Activated CD8-positive, alpha-beta T cell treated with anti-CD3 and anti-CD28 coated beads for 36 hours (primary cell): ENCODE measurements at regions of chr12 and their contacts with region 1.

Region 1: GRCh38 chr12:49060237-49061156 is at the start of gene KMT2D:
- DNase-seq: peak; percentile 92
- ATAC-seq: peak; percentile 76
- H3K4me3 Mint-ChIP-seq: peak within 1 kb of the TSS; percentile 97
- H3K27ac Mint-ChIP-seq: peak within 1 kb of the TSS; percentile 98
- H3K4me1 Mint-ChIP-seq: peaks cover 39% of the 10 kb centered on the region
- H3K27me3 Mint-ChIP-seq: no peaks in the 10 kb centered on the region
- CTCF ChIP-seq: no peak
- total RNA-seq, gene KMT2D: 57.5 to 62.3 TPM

Region 2: DNA sequence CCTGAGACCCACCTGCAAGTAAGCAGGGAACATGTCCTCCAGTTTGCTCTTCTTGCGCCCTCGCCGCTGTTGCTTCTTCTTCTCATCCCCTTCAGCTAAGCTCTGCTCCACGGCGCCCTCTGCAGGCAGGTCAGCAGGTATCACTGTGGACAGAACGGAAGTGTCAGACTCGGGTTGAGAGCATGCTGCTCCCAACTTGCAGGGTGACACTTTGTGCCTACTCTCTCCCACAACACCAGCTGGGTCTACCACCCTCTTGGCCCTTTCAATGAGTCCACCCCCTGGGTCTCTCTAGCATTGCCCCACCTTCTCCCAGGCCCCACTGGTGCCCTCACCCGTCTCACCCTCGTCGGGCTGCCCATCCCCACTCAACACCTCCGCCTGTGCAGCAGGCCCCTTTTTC is 16.6 kb before region 1 on chr12:
- CTCF ChIA-PET with region 1: interaction called, 56 read pairs
- POLR2A ChIA-PET with region 1: interaction called, 6 read pairs
- intact Hi-C with region 1: no loop called
- DNase-seq: peak; percentile 84
- ATAC-seq: peak; percentile 94
- H3K4me3 Mint-ChIP-seq: no peak overlapping the region
- H3K27ac Mint-ChIP-seq: no peak overlapping the region
- H3K4me1 Mint-ChIP-seq: no peaks in the 10 kb centered on the region
- H3K27me3 Mint-ChIP-seq: no peaks in the 10 kb centered on the region
- CTCF ChIP-seq: peak; percentile 86

Region 3: DNA sequence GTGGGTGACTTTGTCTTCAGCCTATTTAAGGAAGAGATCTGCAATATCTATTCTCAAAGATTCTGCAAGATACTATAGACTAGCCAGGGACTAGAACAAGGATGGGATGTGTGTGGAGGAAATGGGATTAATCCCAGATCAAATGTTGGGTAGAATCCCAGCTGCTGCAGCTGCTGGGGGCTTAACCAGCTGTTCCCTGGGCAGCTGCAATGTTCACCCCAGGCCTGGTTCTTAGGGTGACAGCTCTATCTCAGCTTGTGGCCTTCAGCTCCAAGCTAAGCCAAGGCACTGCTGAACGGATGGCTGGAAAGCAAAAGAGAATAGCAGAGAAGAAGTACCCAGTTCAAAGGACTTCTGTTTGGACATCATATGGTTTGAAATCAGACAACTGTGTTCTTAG is 19.3 kb after region 1 on chr12:
- CTCF ChIA-PET with region 1: interaction called, 161 read pairs
- POLR2A ChIA-PET with region 1: interaction called, 5 read pairs
- intact Hi-C with region 1: no loop called
- DNase-seq: no peak
- ATAC-seq: no peak
- H3K4me3 Mint-ChIP-seq: no peak overlapping the region
- H3K27ac Mint-ChIP-seq: no peak overlapping the region
- H3K4me1 Mint-ChIP-seq: no peaks in the 10 kb centered on the region
- H3K27me3 Mint-ChIP-seq: no peaks in the 10 kb centered on the region
- CTCF ChIP-seq: no peak

Region 4: DNA sequence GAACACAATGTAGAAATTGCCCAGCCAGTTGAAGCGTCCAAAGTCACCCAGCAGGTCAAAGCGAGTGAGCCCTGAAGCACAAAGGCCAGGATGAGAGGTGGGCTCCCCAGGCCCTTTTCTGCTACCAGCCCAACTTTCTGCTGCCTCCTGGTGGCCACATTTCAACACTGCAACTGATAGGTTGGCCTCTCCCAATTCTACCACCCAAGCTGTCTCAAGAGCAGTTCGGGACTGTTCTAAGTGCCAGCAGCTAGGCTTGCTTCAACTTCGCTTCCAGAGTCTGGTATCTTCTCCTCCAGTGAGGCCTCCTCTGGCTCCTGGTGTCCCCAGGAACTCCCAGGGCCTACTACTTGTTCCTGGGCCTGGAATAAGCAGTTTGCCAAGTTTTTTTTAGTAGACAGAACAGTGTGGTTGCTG is 37.5 kb after region 1 on chr12:
- CTCF ChIA-PET with region 1: interaction called, 220 read pairs
- POLR2A ChIA-PET with region 1: interaction called, 3 read pairs
- intact Hi-C with region 1: loop called (anchors 2 kb)
- DNase-seq: peak; percentile 81
- ATAC-seq: peak; percentile 87
- H3K4me3 Mint-ChIP-seq: no peak overlapping the region
- H3K27ac Mint-ChIP-seq: no peak overlapping the region
- H3K4me1 Mint-ChIP-seq: peaks cover 7% of the 10 kb centered on the region
- H3K27me3 Mint-ChIP-seq: peaks cover 21% of the 10 kb centered on the region
- CTCF ChIP-seq: peak; percentile 87

Region 5: GRCh38 chr12:49105608-49106007 is 45.1 kb after region 1 on chr12:
- CTCF ChIA-PET with region 1: interaction called, 220 read pairs
- POLR2A ChIA-PET with region 1: interaction called, 12 read pairs
- intact Hi-C with region 1: no loop called
- DNase-seq: no peak
- ATAC-seq: no peak
- H3K4me3 Mint-ChIP-seq: no peak overlapping the region
- H3K27ac Mint-ChIP-seq: no peak overlapping the region
- H3K4me1 Mint-ChIP-seq: peaks cover 27% of the 10 kb centered on the region
- H3K27me3 Mint-ChIP-seq: no peaks in the 10 kb centered on the region
- CTCF ChIP-seq: no peak

Region 6: GRCh38 chr12:49110464-49111155 is 50.1 kb after region 1 on chr12 and contains the start of gene LMBR1L:
- CTCF ChIA-PET with region 1: interaction called, 24 read pairs
- POLR2A ChIA-PET with region 1: interaction called, 12 read pairs
- intact Hi-C with region 1: no loop called
- DNase-seq: peak; percentile 99
- ATAC-seq: peak; percentile 99
- H3K4me3 Mint-ChIP-seq: peak within 1 kb of the TSS; percentile 87
- H3K27ac Mint-ChIP-seq: peak within 1 kb of the TSS; percentile 97
- H3K4me1 Mint-ChIP-seq: peaks cover 35% of the 10 kb centered on the region
- H3K27me3 Mint-ChIP-seq: no peaks in the 10 kb centered on the region
- CTCF ChIP-seq: peak; percentile 50
- total RNA-seq, gene LMBR1L: 43.5 to 50.9 TPM